ENCODE measurements at regions of chr4 and their contacts with region 1.

Region 1: DNA sequence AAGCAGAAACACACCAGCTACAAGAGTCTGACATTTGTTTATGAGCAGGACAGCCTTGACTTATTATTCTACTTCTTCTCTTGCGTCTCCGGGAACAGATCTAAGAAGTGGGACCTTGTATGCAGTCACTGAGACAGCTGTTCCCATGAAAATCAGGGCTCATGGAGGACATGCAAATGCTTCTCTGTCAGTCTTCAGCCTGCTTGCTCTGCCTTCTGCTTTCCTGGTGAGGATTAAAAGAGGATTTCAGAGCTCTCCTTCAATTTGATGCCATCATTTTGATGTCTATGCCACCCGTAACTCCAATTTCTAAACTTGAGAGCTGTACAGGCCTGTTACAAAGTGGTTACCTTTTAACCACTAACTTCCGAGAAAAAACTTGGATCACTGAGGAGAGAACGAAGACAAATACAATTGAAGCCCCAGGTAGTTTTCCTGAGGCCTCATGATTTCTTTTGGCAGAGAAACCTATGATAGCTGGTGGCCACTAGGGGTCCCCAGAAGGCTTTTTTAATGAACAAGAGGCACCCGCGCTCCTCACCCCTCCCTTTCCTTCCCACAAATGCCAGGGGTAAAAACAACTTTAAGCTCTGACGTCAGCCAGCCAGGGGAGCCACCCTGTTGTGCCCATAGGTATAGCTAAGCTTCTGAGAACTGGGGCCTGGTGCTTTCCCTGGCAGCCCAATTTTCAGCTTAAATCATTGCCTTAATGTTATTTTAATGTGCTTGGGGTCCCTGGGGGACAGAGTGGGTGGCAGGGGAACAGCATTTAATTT is 97.0 kb downstream of the DDIT4L start:
- DNase-seq: peak; percentile 75
- H3K4me3 Mint-ChIP-seq: no peak overlapping the region
- H3K27ac Mint-ChIP-seq: peak overlapping the region; percentile 81
- H3K4me1 Mint-ChIP-seq: peaks cover 56% of the 10 kb centered on the region
- H3K27me3 Mint-ChIP-seq: no peaks in the 10 kb centered on the region

Region 2: DNA sequence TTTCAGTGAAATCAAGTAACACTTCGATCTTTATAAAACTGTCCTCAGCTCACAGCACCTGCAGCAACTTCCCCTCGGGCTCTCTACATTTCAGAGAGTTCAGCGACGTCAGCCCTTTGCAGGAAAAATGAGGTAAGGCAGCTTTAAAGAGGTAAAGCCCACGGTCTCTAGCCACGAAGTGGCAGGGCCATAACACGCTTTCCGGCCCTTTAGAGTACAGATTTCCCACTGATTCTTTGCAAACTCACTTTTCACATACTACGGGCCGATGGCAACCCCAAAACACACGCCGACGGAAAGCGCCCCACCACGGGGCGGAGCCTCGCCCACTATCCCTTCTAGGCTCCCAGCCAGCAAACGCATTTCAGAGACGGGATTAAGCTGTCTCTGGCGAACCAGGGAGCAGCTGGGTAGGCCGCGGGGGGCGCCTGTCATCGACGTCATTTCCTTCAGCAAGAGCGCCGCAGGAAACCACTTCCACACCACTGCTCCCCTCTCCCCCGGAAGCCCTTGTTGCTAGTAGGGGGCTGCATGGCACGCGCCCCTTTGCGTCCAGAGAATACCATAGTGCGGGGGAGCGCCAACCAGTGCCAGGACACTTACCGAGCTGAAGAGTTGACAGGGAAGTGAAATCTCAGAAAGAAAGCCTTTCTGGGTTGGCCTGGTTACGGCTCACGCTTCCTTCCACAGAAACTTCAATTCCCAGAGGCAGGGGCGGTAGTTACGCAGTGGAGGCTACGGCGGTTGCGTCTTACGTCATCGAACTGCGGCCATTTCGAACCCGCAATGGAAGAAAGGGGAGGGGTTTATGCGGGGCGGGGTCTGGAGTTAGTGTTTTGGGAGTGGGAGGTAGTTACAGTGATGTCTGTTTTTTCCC is 529.7 kb before region 1 on chr4 and contains the start of gene TRMT10A:
- intact Hi-C with region 1: loop called (anchors 5 kb)
- DNase-seq: peak; percentile 92
- H3K4me3 Mint-ChIP-seq: peak within 1 kb of the TSS; percentile 89
- H3K27ac Mint-ChIP-seq: peak within 1 kb of the TSS; percentile 96
- H3K4me1 Mint-ChIP-seq: peaks cover 25% of the 10 kb centered on the region
- H3K27me3 Mint-ChIP-seq: peaks cover 11% of the 10 kb centered on the region
- total RNA-seq, gene TRMT10A: 7.3 TPM in 2 replicates

Region 3: GRCh38 chr4:100117750-100118149 is 24.5 kb after region 1 on chr4:
- intact Hi-C with region 1: no loop called
- DNase-seq: no peak
- H3K4me3 Mint-ChIP-seq: no peak overlapping the region
- H3K27ac Mint-ChIP-seq: no peak overlapping the region
- H3K4me1 Mint-ChIP-seq: peaks cover 10% of the 10 kb centered on the region
- H3K27me3 Mint-ChIP-seq: peaks cover 3% of the 10 kb centered on the region

Region 4: GRCh38 chr4:100189820-100190642 is 96.8 kb after region 1 on chr4 and contains the start of gene DDIT4L:
- intact Hi-C with region 1: loop called (anchors 5 kb)
- DNase-seq: no peak
- H3K4me3 Mint-ChIP-seq: peak within 1 kb of the TSS; percentile 82
- H3K27ac Mint-ChIP-seq: no peak within 1 kb of the TSS
- H3K4me1 Mint-ChIP-seq: peaks cover 21% of the 10 kb centered on the region
- H3K27me3 Mint-ChIP-seq: peaks cover 45% of the 10 kb centered on the region
- total RNA-seq, gene DDIT4L: 0.34 and 0.76 TPM in 2 replicates

Region 5: GRCh38 chr4:100895556-100896197 is 802.4 kb after region 1 on chr4:
- intact Hi-C with region 1: loop called (anchors 10 kb)
- DNase-seq: no peak
- H3K4me3 Mint-ChIP-seq: peak overlapping the region; percentile 67
- H3K27ac Mint-ChIP-seq: peak overlapping the region; percentile 15
- H3K4me1 Mint-ChIP-seq: peaks cover 18% of the 10 kb centered on the region
- H3K27me3 Mint-ChIP-seq: no peaks in the 10 kb centered on the region

Region 6: GRCh38 chr4:101205916-101206315 is 1112.6 kb after region 1 on chr4:
- intact Hi-C with region 1: loop called (anchors 5 kb)
- DNase-seq: peak; percentile 56
- H3K4me3 Mint-ChIP-seq: peak overlapping the region; percentile 0
- H3K27ac Mint-ChIP-seq: peak overlapping the region; percentile 67
- H3K4me1 Mint-ChIP-seq: peaks cover 42% of the 10 kb centered on the region
- H3K27me3 Mint-ChIP-seq: no peaks in the 10 kb centered on the region

Region 7: DNA sequence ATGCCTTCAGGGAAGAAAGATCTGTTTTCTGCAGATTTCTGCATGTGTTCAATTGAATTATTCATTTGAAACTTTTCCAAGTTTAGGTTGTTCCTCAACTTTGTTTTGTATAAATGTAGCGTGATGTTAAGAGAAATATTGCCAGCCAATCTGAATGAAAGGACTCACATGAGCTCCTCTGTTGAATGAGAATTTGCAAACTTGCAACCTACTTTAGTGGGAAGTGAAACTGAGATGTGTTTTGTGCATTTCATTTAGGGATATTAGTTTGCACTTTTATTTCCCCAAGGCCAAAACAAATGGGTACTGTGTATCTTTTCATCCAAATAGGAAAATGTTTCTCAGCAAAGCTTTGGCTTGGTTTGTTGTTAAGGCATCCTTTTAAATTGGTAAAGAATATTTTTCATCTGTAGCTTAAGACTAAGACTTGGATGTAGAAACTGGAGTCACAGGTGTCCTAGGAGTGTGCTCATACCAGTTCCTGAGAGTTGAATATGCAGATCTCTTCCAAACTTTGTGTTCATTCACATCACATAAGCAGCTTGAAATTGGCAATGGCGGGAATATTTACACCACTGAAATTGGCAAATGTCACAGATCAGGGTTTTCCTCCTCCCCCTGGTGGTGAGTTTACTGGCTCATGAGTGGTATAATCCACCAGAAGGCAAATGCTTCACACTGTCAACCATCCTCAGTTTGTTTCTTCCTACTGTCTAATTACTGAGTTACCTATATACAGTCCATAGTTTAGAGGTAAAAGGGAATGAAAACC is 1503.7 kb after region 1 on chr4:
- intact Hi-C with region 1: loop called (anchors 10 kb)
- DNase-seq: no peak
- H3K4me3 Mint-ChIP-seq: no peak overlapping the region
- H3K27ac Mint-ChIP-seq: no peak overlapping the region
- H3K4me1 Mint-ChIP-seq: peaks cover 12% of the 10 kb centered on the region
- H3K27me3 Mint-ChIP-seq: no peaks in the 10 kb centered on the region

Measured in activated T-helper 1 cell treated with anti-CD3 and anti-CD28 coated beads, Interleukin-12 subunit alpha, Interleukin-12 subunit beta, Interleukin-2, Interleukin-4 antibody, amounts not matched to agents 30 ng/mL and 10 ng/mL and 1 ng/mL, durations not matched to agents 14 hours and 24 hours and 36 hours (primary cell).